H1 (cell line): ENCODE measurements at regions of chr14 and their contacts with region 1.

Region 1: GRCh38 chr14:77067632-77068514 is 30.2 kb upstream of the CIPC start:
- DNase-seq: peak; percentile 62 to 85
- H3K4me3 ChIP-seq: no peak overlapping the region
- H3K27ac ChIP-seq: no peak overlapping the region
- H3K4me1 ChIP-seq: peaks cover 0 to 3% (median 1%) of the 10 kb centered on the region in 4 experiments; a peak in 4 of 7 replicates
- H3K27me3 ChIP-seq: no peaks in the 10 kb centered on the region
- CTCF ChIP-seq: peak; percentile 94 to 98 (median 95)
- EP300 ChIP-seq: no peak
- POLR2A ChIP-seq: no peak
- RAD21 ChIP-seq: peak; percentile 98 to 99

Region 2: DNA sequence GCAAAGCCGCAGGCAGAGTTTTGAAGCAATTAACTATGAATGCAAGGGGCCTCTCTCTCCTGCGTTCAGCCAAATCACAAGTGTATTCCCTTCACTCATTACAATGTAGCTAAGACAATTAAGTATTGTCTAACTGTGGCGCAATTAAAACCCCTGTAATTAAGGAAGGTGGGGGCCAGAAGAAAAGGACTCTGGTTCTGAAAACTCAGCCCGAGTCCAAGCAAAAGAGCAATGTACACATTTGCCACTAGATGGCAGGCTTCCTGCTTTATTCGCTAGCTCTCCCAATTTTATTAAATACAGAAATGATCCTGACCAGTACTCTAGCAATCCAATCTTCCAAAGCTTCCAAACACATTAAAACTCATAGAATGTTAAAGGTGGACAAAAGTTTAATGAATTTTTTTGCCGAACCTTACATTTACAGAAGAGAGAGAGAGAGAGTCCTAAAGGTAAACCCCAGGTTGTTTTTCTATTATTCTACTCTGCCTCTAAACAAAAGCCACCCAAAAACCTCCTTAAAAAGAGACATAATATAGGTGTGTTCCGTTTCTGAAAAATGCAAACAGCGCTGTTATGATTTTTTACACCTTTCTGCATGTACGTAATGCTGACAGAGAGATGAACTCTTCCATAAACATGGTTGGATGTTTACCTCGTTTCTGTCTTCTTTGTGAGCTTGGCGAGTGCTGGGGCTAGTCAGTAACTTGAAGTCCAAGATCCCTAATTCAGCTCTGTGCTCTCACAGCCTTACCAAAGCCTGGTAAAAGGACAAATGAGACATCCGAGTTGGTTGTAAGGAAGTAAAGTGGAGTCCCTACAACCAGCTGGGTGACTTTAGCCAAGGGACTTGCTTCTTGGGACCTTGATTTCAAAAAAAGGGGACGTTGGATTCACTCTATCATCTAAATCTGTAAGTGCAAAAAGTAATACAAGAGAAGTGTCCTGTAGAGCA is 357.5 kb before region 1 on chr14:
- CTCF ChIA-PET with region 1: interaction called, 13 read pairs
- POLR2A ChIA-PET with region 1: no interaction called
- DNase-seq: peak in 1 of 2 experiments; percentile 46
- H3K4me3 ChIP-seq: no peak overlapping the region
- H3K27ac ChIP-seq: no peak overlapping the region
- H3K4me1 ChIP-seq: no peaks in the 10 kb centered on the region
- H3K27me3 ChIP-seq: no peaks in the 10 kb centered on the region
- CTCF ChIP-seq: peak; percentile 1 to 72 (median 60)
- EP300 ChIP-seq: no peak
- POLR2A ChIP-seq: no peak
- RAD21 ChIP-seq: peak; percentile 74 to 76

Region 3: GRCh38 chr14:76931631-76932402 is 136.1 kb before region 1 on chr14:
- CTCF ChIA-PET with region 1: interaction called, 14 read pairs
- POLR2A ChIA-PET with region 1: no interaction called
- DNase-seq: no peak
- H3K4me3 ChIP-seq: no peak overlapping the region
- H3K27ac ChIP-seq: no peak overlapping the region
- H3K4me1 ChIP-seq: peaks cover 8 to 31% (median 22%) of the 10 kb centered on the region in 4 experiments
- H3K27me3 ChIP-seq: no peaks in the 10 kb centered on the region
- CTCF ChIP-seq: no peak
- EP300 ChIP-seq: no peak
- POLR2A ChIP-seq: no peak
- RAD21 ChIP-seq: no peak

Region 4: GRCh38 chr14:76968621-76969063 is 99.2 kb before region 1 on chr14:
- CTCF ChIA-PET with region 1: interaction called, 10 read pairs
- POLR2A ChIA-PET with region 1: no interaction called
- DNase-seq: no peak
- H3K4me3 ChIP-seq: no peak overlapping the region
- H3K27ac ChIP-seq: peak overlapping the region; percentile 56; the same call in 1 of the 2 replicates
- H3K4me1 ChIP-seq: peaks cover 0 to 33% (median 17%) of the 10 kb centered on the region in 4 experiments; a peak in 6 of 7 replicates
- H3K27me3 ChIP-seq: no peaks in the 10 kb centered on the region
- CTCF ChIP-seq: peak in 2 of 3 experiments; percentile 23 to 25; a peak in 2 of 4 replicates
- EP300 ChIP-seq: no peak
- POLR2A ChIP-seq: no peak
- RAD21 ChIP-seq: peak; percentile 26 to 41; a peak in 3 of 4 replicates

Region 5: DNA sequence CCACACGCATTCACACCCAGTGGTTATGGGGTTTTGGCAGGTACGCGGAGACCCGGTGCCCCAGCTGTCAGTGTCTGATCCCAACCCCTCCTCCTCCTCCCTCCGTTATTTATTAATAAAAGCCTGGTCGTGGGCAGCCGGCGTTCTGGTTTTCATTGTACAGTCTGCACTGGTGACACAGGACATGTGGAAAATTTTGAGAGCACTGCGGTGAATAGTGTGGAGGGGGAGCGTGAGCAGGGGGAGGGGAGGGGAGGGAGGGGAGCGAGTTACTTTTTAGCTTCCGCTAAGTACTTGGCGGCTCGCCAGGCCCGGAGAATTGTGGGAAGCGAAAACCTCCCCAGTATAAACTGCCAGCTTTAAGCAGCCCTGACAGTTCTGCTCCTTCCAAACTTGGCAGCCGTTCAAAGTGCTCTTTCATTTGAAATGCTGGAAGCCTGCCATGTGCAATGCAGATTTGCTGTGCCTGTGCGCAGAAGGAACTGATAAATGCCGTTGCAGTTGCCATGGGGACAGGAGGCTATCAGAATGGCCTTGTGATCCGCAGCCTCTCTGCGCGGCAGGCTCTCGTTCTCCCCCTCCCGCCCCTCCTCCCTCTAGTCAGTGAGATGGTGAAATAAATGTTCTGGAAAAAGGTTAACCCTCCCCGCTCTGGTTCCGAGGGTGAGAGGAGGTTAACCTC is 27.7 kb before region 1 on chr14:
- CTCF ChIA-PET with region 1: interaction called, 20 read pairs
- POLR2A ChIA-PET with region 1: interaction called, 3 read pairs
- DNase-seq: peak in 1 of 2 experiments; percentile 80
- H3K4me3 ChIP-seq: peak overlapping the region; percentile 22 to 58 (median 52); a peak in 7 of 8 replicates
- H3K27ac ChIP-seq: no peak overlapping the region
- H3K4me1 ChIP-seq: peaks cover 33 to 65% (median 41%) of the 10 kb centered on the region in 4 experiments; a peak in 6 of 7 replicates
- H3K27me3 ChIP-seq: peaks cover 0 to 4% (median 2%) of the 10 kb centered on the region in 4 experiments; a peak in 2 of 7 replicates
- CTCF ChIP-seq: no peak
- EP300 ChIP-seq: no peak; a peak in 1 of 3 replicates
- POLR2A ChIP-seq: no peak
- RAD21 ChIP-seq: no peak

Region 6: GRCh38 chr14:77097700-77098528 is 30.0 kb after region 1 on chr14 and contains the start of gene CIPC:
- CTCF ChIA-PET with region 1: interaction called, 603 read pairs
- POLR2A ChIA-PET with region 1: interaction called, 4 read pairs
- DNase-seq: peak; percentile 95 to 98
- H3K4me3 ChIP-seq: peak within 1 kb of the TSS; percentile 87 to 96 (median 88)
- H3K27ac ChIP-seq: peak within 1 kb of the TSS; percentile 86
- H3K4me1 ChIP-seq: peaks cover 0 to 8% (median 4%) of the 10 kb centered on the region in 4 experiments; a peak in 4 of 7 replicates
- H3K27me3 ChIP-seq: no peaks in the 10 kb centered on the region
- CTCF ChIP-seq: no peak
- EP300 ChIP-seq: peak in 1 of 2 experiments; percentile 60; a peak in 1 of 3 replicates
- POLR2A ChIP-seq: no peak
- RAD21 ChIP-seq: peak; percentile 13 to 16; a peak in 2 of 4 replicates
- total RNA-seq, gene CIPC: 31.7 and 32.7 TPM in 2 replicates